Activated CD4-positive, alpha-beta memory T cell treated with anti-CD3 and anti-CD28 coated beads, Interleukin-2, amount 10 ng/mL, durations not matched to agents 7 days and 5 days (primary cell): ENCODE measurements at regions of chr2 and their contacts with region 1.

Region 1: GRCh38 chr2:135985018-135985825 is at the start of gene DARS1:
- DNase-seq: peak; percentile 88
- H3K4me3 Mint-ChIP-seq: peak within 1 kb of the TSS; percentile 87
- H3K27ac Mint-ChIP-seq: peak within 1 kb of the TSS; percentile 87
- H3K4me1 Mint-ChIP-seq: peaks cover 47% of the 10 kb centered on the region
- H3K27me3 Mint-ChIP-seq: no peaks in the 10 kb centered on the region
- total RNA-seq, gene DARS1: 147 to 151 TPM

Region 2: GRCh38 chr2:135948642-135949355 is 36.4 kb before region 1 on chr2:
- CTCF ChIA-PET with region 1: interaction called, 4 read pairs
- POLR2A ChIA-PET with region 1: interaction called, 12 read pairs
- DNase-seq: peak; percentile 29
- H3K4me3 Mint-ChIP-seq: peak overlapping the region; percentile 51
- H3K27ac Mint-ChIP-seq: peak overlapping the region; percentile 85
- H3K4me1 Mint-ChIP-seq: peaks cover 42% of the 10 kb centered on the region
- H3K27me3 Mint-ChIP-seq: no peaks in the 10 kb centered on the region

Region 3: GRCh38 chr2:135997380-135997779 is 12.2 kb after region 1 on chr2:
- CTCF ChIA-PET with region 1: interaction called, 5 read pairs
- POLR2A ChIA-PET with region 1: interaction called, 43 read pairs
- DNase-seq: no peak
- H3K4me3 Mint-ChIP-seq: no peak overlapping the region
- H3K27ac Mint-ChIP-seq: no peak overlapping the region
- H3K4me1 Mint-ChIP-seq: peaks cover 17% of the 10 kb centered on the region
- H3K27me3 Mint-ChIP-seq: no peaks in the 10 kb centered on the region

Region 4: DNA sequence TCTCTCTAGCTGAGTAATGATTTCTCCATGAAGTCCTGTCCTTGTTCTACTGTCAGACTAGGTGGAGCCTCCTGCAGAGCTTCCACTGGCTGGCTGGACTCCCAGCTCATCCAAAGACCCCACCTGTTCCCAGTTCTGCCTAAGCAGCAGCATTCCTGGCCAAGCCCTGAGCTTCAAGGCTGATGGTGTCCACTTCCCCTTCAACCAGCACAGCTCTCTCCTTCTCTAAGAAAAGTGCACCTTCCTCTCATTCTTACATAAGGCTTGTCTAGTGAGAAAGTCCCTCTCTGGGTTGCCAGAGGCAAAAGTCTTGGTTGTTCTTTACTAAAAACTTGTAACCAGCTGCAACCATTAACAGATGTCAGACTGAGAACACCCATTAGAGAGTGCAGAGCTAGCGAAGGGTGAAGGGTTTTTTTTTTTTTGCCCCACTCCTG is 73.8 kb after region 1 on chr2:
- CTCF ChIA-PET with region 1: interaction called, 6 read pairs
- POLR2A ChIA-PET with region 1: interaction called, 220 read pairs
- DNase-seq: no peak
- H3K4me3 Mint-ChIP-seq: no peak overlapping the region
- H3K27ac Mint-ChIP-seq: peak overlapping the region; percentile 36
- H3K4me1 Mint-ChIP-seq: peaks cover 54% of the 10 kb centered on the region
- H3K27me3 Mint-ChIP-seq: no peaks in the 10 kb centered on the region

Region 5: DNA sequence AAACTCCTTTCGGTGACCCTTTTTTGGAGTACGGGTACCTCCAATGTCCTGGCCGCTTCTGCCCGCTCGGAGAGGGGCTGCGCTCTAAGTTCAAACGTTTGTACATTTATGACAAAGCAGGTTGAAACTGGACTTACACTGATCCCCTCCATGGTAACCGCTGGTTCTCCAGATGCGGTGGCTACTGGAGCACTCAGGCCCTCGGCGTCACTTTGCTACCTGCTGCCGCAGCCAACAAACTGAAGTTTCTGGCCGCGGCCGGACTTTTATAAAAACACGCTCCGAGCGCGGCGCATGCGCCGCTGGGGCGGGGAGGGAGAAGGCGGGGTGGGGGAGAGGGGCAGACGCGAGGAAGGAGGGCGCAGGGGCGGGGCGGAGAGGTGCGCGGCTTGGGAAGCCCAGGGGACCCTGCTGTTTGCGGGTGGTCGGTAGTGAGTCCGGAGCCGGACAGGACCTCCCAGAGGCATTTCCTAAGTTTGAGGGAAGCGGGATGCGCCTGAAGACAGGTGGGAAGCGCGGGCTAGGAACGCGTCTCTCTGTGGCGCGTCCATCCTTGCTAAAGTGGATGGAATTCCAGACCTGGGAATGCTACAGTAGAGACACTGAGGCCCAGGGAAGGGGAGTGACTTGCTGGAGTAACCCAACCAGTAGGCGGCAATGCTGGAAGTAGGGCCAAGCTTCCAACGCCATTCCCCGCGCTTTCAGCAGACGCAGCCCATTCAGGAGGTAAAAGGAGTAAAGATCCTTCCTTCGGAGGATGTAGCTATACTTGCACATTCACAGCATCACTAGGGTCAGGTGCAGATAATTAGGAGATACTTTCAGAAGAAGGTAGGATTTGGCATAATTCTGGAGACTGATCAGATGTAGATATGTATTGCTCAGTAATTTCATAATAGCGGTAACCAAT is 132.9 kb after region 1 on chr2 and contains the start of gene CXCR4:
- CTCF ChIA-PET with region 1: interaction called, 5 read pairs
- POLR2A ChIA-PET with region 1: interaction called, 55 read pairs
- DNase-seq: peak; percentile 90
- H3K4me3 Mint-ChIP-seq: peak within 1 kb of the TSS; percentile 98
- H3K27ac Mint-ChIP-seq: peak within 1 kb of the TSS; percentile 97
- H3K4me1 Mint-ChIP-seq: peaks cover 43% of the 10 kb centered on the region
- H3K27me3 Mint-ChIP-seq: peaks cover 31% of the 10 kb centered on the region
- total RNA-seq, gene CXCR4: 202 to 212 TPM

Region 6: GRCh38 chr2:136225950-136226835 is 241.0 kb after region 1 on chr2:
- CTCF ChIA-PET with region 1: no interaction called
- POLR2A ChIA-PET with region 1: no interaction called
- DNase-seq: no peak
- H3K4me3 Mint-ChIP-seq: no peak overlapping the region
- H3K27ac Mint-ChIP-seq: no peak overlapping the region
- H3K4me1 Mint-ChIP-seq: peaks cover 9% of the 10 kb centered on the region
- H3K27me3 Mint-ChIP-seq: peaks cover 13% of the 10 kb centered on the region